Activated CD8-positive, alpha-beta memory T cell treated with anti-CD3 and anti-CD28 coated beads, Interleukin-2, amount 10 ng/mL, durations not matched to agents 7 days and 5 days (primary cell): ENCODE measurements at regions of chr14 and their contacts with region 1.

Region 1: DNA sequence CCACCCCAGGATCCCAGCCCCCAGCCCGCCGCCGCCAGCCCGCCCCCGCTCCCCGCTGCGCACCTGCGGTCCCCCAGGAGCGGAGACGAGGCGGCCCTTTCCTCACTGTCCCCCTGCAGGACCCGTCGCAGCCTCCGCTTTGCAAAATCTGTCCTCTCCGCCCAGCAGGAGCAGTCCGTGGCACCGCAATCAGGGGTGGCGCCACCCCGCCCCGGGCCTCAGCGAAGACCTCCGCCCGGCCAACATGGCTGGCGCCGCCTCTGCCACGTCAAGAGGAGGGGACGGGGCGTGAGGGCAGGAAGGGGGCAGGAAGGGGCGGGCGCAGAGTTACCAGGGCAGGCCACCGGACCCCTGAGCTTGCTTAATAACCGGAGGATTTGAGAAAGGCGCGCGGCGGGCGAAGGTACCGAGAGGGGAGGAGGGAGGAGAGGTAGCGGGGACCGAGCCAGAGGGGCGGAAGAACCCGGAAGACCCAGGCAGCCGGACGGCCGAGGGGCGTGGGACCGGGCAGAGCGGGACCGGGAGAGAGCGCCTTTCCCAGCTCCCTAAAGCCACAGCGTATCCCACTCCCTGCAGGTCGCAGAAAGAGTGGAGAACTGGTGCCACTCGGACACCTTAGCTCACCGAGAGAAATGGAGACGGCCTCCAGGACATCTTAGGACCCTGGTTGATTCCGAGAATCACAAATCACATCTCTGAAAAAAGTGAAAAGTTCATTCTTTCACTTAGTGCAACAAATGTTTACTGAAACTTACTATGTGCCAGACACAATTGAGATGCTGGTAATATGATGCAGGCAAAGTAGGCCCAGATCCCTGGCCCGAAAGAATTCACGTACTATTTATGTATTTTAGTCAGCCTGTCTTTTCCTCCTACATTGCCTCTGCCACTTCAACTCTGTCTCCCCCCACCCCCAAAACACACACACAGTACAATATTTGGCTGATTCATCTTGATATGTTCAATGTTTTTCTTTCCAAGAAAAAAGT is at the start of gene SEC23A:
- DNase-seq: peak; percentile 91
- ATAC-seq: peak; percentile 97
- H3K4me3 Mint-ChIP-seq: peak within 1 kb of the TSS; percentile 94
- H3K27ac Mint-ChIP-seq: peak within 1 kb of the TSS; percentile 91
- H3K4me1 Mint-ChIP-seq: peaks cover 47% of the 10 kb centered on the region
- H3K27me3 Mint-ChIP-seq: no peaks in the 10 kb centered on the region
- total RNA-seq, gene SEC23A: 43.7 to 54.3 TPM

Region 2: GRCh38 chr14:38910092-38910491 is 193.2 kb before region 1 on chr14:
- CTCF ChIA-PET with region 1: no interaction called
- DNase-seq: no peak
- ATAC-seq: no peak
- H3K4me3 Mint-ChIP-seq: no peak overlapping the region
- H3K27ac Mint-ChIP-seq: no peak overlapping the region
- H3K4me1 Mint-ChIP-seq: no peaks in the 10 kb centered on the region
- H3K27me3 Mint-ChIP-seq: peaks cover 9% of the 10 kb centered on the region

Region 3: DNA sequence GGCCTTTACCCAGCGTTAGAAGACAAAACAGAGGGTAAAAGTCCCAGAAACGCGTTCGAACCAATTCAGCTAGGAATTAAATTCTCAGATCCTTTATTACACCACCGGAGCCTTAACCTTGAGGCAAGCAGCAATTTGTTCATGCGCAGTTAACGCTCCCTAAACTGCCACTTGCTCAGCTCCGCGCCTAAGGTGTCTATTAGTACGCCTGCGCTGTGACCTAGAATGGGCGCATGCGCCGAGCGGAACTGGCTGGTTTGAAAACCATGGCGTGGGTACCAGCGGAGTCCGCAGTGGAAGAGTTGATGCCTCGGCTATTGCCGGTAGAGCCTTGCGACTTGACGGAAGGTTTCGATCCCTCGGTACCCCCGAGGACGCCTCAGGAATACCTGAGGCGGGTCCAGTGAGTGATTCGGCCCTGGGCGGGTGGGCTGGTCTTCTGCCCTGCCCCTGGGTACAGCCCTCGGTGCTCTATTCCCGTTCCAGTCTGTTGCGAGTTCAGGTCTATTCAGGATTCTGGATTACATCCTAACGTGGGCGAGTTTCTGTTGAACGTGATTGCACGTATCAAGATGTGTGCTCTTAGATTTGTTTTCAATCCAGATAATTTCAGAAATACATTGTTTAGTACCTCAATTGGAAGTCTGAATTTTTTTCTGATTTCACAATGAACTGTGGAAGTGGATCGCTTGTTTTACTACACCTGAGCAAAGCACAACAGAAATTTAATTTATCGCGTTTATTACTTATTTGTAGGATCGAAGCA is 11.0 kb after region 1 on chr14 and contains the start of gene GEMIN2:
- CTCF ChIA-PET with region 1: interaction called, 10 read pairs
- DNase-seq: peak; percentile 97
- ATAC-seq: peak; percentile 99
- H3K4me3 Mint-ChIP-seq: peak within 1 kb of the TSS; percentile 98
- H3K27ac Mint-ChIP-seq: peak within 1 kb of the TSS; percentile 98
- H3K4me1 Mint-ChIP-seq: peaks cover 35% of the 10 kb centered on the region
- H3K27me3 Mint-ChIP-seq: no peaks in the 10 kb centered on the region
- total RNA-seq, gene GEMIN2: 22.5 to 26.3 TPM